Panc1 (cell line): ENCODE measurements at regions of chr10 and their contacts with region 1.

Region 1: GRCh38 chr10:59625721-59626522 is 83.7 kb downstream of the SLC16A9 start:
- DNase-seq: peak; percentile 47
- ATAC-seq: peak; percentile 92
- H3K4me3 ChIP-seq: no peak overlapping the region
- H3K27ac ChIP-seq: no peak overlapping the region
- H3K4me1 ChIP-seq: no peaks in the 10 kb centered on the region
- H3K27me3 ChIP-seq: no peaks in the 10 kb centered on the region
- CTCF ChIP-seq: peak; percentile 86

Region 2: DNA sequence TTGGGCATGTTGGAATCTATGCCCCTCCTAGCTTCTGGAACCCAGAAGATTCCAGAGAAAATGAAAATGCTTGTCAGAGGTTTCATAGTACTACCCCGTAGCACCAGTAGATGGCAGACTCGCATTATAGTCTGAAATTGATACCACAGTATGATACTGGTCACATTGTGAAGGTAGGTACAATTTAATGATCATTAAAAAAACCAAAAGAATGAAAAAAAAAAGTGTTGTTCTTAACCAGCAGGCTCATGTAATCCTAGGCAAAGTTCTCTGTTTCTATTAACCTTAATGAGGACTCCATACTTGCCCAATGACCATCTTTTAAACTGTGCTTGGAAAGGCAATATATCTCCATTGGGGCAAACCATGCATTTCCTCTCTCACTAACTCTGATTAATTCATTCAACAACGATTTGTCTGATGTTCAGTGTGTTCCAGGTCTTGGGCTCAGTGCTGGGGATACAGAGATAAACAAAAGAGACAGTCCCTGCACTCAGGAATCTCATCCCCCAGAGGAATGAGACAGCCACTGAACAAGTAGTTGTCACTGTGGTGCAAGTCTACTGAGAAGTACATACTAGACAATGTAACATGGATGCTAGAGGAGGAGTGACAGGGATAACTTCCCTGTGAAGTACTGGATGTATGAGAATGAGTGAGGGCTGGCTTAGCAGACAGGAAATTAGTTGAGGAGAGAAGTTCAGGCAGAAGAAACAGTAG is 673.0 kb before region 1 on chr10:
- CTCF ChIA-PET with region 1: no interaction called
- POLR2A ChIA-PET with region 1: no interaction called
- in situ Hi-C with region 1: no loop called
- intact Hi-C with region 1: loop called (anchors 2 kb)
- DNase-seq: peak; percentile 25
- ATAC-seq: peak; percentile 80
- H3K4me3 ChIP-seq: no peak overlapping the region
- H3K27ac ChIP-seq: no peak overlapping the region
- H3K4me1 ChIP-seq: no peaks in the 10 kb centered on the region
- H3K27me3 ChIP-seq: no peaks in the 10 kb centered on the region
- CTCF ChIP-seq: peak; percentile 82

Region 3: GRCh38 chr10:59808896-59809643 is 183.1 kb after region 1 on chr10:
- CTCF ChIA-PET with region 1: no interaction called
- POLR2A ChIA-PET with region 1: no interaction called
- in situ Hi-C with region 1: no loop called
- intact Hi-C with region 1: loop called (anchors 2 kb)
- DNase-seq: peak; percentile 50
- ATAC-seq: peak; percentile 91
- H3K4me3 ChIP-seq: no peak overlapping the region
- H3K27ac ChIP-seq: no peak overlapping the region
- H3K4me1 ChIP-seq: no peaks in the 10 kb centered on the region
- H3K27me3 ChIP-seq: no peaks in the 10 kb centered on the region
- CTCF ChIP-seq: peak; percentile 86

Region 4: GRCh38 chr10:59830601-59831259 is 204.8 kb after region 1 on chr10:
- CTCF ChIA-PET with region 1: interaction called, 8 read pairs
- POLR2A ChIA-PET with region 1: interaction called, 6 read pairs
- in situ Hi-C with region 1: no loop called
- intact Hi-C with region 1: loop called (anchors 2 kb)
- DNase-seq: peak; percentile 25
- ATAC-seq: peak; percentile 94
- H3K4me3 ChIP-seq: no peak overlapping the region
- H3K27ac ChIP-seq: no peak overlapping the region
- H3K4me1 ChIP-seq: no peaks in the 10 kb centered on the region
- H3K27me3 ChIP-seq: no peaks in the 10 kb centered on the region
- CTCF ChIP-seq: peak; percentile 91

Region 5: GRCh38 chr10:60032723-60033122 is 406.8 kb after region 1 on chr10:
- CTCF ChIA-PET with region 1: interaction called, 5 read pairs
- POLR2A ChIA-PET with region 1: no interaction called
- in situ Hi-C with region 1: no loop called
- intact Hi-C with region 1: loop called (anchors 1 kb)
- DNase-seq: peak; percentile 38
- ATAC-seq: peak; percentile 77
- H3K4me3 ChIP-seq: no peak overlapping the region
- H3K27ac ChIP-seq: no peak overlapping the region
- H3K4me1 ChIP-seq: no peaks in the 10 kb centered on the region
- H3K27me3 ChIP-seq: 0 out of 2 replicates have a peak, but pooled peaks cover 3% of the 10 kb centered on the region
- CTCF ChIP-seq: peak; percentile 75

Region 6: GRCh38 chr10:60208676-60209269 is 582.9 kb after region 1 on chr10:
- CTCF ChIA-PET with region 1: no interaction called
- POLR2A ChIA-PET with region 1: no interaction called
- in situ Hi-C with region 1: no loop called
- intact Hi-C with region 1: loop called (anchors 5 kb)
- DNase-seq: peak; percentile 25
- ATAC-seq: no peak
- H3K4me3 ChIP-seq: no peak overlapping the region
- H3K27ac ChIP-seq: no peak overlapping the region
- H3K4me1 ChIP-seq: no peaks in the 10 kb centered on the region
- H3K27me3 ChIP-seq: peaks cover 3% of the 10 kb centered on the region; the same call in 1 of the 2 replicates
- CTCF ChIP-seq: peak; percentile 76; the same call in 1 of the 2 replicates